ENCODE measurements at regions of chr22 and their contacts with region 1.

Region 1: DNA sequence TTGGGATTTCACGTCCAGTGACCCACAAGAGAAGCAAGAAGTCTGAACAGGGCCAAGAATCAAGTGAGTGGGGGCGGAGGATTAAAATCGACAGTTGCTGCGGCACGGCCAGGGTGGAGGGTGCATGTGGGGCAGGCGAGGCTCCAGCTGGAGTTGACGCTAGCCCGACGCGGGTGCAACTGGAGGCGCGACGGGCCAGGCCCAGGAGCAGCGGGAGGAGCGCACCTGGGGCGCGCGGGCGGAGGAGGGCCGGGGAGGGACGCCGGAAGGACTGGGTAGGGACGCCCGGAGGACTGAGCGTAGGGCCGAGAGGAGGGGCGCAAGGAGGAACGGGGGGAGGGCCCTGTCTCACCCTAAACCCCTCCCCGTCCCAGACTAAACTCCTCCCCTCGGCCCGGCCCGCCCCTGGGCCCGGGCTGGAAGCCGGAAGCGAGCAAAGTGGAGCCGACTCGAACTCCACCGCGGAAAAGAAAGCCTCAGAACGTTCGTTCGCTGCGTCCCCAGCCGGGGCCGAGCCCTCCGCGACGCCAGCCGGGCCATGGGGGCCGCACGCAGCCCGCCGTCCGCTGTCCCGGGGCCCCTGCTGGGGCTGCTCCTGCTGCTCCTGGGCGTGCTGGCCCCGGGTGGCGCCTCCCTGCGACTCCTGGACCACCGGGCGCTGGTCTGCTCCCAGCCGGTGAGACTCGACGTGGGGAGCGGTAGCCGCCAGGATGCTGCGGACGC is at the start of gene IL17RA:
- DNase-seq: peak; percentile 93 to 94
- H3K4me3 ChIP-seq: peak within 1 kb of the TSS; percentile 98
- H3K4me3 Mint-ChIP-seq: peak within 1 kb of the TSS; percentile 93
- H3K27ac Mint-ChIP-seq: peak within 1 kb of the TSS; percentile 73
- H3K4me1 ChIP-seq: no peaks in the 10 kb centered on the region
- H3K4me1 Mint-ChIP-seq: peaks cover 8% of the 10 kb centered on the region
- H3K27me3 ChIP-seq: no peaks in the 10 kb centered on the region
- H3K27me3 Mint-ChIP-seq: no peaks in the 10 kb centered on the region
- CTCF ChIP-seq: no peak
- total RNA-seq, gene IL17RA: 13.7 and 14.5 TPM in 2 replicates

Region 2: DNA sequence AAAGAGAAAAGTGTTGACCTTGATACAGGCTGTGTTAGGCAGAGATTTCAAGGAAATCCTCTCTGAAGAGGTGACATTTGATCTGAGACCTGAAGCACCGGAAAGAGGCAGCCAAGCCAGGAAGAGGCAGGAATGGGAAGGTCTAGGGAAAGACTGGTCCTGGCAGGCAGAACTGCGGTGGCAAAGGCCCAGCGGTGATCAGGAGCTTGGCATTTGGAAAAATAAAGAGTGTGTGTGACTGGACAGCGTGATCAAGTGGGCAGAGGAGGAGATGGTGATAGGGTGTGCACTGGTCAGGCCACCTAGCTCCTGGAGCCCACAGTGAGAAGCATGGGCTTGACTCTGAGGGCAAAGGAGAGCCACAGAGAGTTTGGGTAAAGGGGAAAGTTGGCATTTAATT is 49.5 kb before region 1 on chr22:
- CTCF ChIA-PET with region 1: no interaction called
- POLR2A ChIA-PET with region 1: no interaction called
- intact Hi-C with region 1: loop called (anchors 2 kb)
- DNase-seq: no peak
- H3K4me3 ChIP-seq: no peak overlapping the region
- H3K4me3 Mint-ChIP-seq: no peak overlapping the region
- H3K27ac Mint-ChIP-seq: no peak overlapping the region
- H3K4me1 ChIP-seq: no peaks in the 10 kb centered on the region
- H3K4me1 Mint-ChIP-seq: no peaks in the 10 kb centered on the region
- H3K27me3 ChIP-seq: no peaks in the 10 kb centered on the region
- H3K27me3 Mint-ChIP-seq: no peaks in the 10 kb centered on the region
- CTCF ChIP-seq: no peak

Region 3: DNA sequence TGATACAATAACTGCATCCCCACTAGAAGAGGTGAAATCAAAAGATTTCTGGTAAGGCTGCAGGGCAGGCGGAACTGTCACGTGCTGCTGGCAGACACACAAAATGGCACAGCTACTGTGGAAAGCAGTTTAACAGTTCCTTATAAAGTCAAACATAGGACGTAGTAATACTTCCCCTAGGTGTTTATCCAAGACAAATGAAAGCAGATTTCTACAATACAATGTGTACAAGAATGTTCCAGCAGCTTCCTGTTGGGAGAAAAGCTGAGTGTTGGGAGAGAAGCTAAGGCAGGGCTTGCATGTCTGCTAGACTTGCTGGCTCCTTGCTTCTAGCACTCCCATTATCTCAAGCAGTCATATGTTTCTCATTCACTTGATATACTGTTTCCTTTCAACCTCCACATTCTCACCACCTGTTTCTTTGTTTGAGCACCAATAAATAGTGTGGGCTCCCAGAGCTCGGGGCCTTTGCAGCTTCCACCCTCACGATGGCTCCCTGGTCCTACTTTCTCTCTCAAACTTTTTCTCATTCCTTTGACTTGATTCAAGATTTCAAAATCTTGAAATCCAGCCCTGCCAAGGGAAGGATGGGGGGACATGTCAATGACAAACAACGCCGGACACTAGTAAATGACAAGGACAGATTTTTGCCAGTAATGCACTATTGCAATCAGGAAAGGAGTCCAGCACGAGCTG is 21.2 kb before region 1 on chr22:
- CTCF ChIA-PET with region 1: no interaction called
- POLR2A ChIA-PET with region 1: no interaction called
- intact Hi-C with region 1: no loop called
- DNase-seq: no peak
- H3K4me3 ChIP-seq: no peak overlapping the region
- H3K4me3 Mint-ChIP-seq: no peak overlapping the region
- H3K27ac Mint-ChIP-seq: no peak overlapping the region
- H3K4me1 ChIP-seq: peaks cover 12% of the 10 kb centered on the region
- H3K4me1 Mint-ChIP-seq: peaks cover 18% of the 10 kb centered on the region
- H3K27me3 ChIP-seq: no peaks in the 10 kb centered on the region
- H3K27me3 Mint-ChIP-seq: no peaks in the 10 kb centered on the region
- CTCF ChIP-seq: no peak

Region 4: GRCh38 chr22:17121227-17122195 is 36.8 kb after region 1 on chr22 and contains the start of gene TMEM121B:
- CTCF ChIA-PET with region 1: no interaction called
- POLR2A ChIA-PET with region 1: no interaction called
- intact Hi-C with region 1: loop called (anchors 5 kb)
- DNase-seq: peak; percentile 73 to 77
- H3K4me3 ChIP-seq: peak within 1 kb of the TSS; percentile 47
- H3K4me3 Mint-ChIP-seq: peak within 1 kb of the TSS; percentile 85
- H3K27ac Mint-ChIP-seq: peak within 1 kb of the TSS; percentile 71
- H3K4me1 ChIP-seq: peaks cover 5% of the 10 kb centered on the region; the same call in 1 of the 2 replicates
- H3K4me1 Mint-ChIP-seq: peaks cover 9% of the 10 kb centered on the region
- H3K27me3 ChIP-seq: no peaks in the 10 kb centered on the region
- H3K27me3 Mint-ChIP-seq: peaks cover 9% of the 10 kb centered on the region
- CTCF ChIP-seq: no peak
- total RNA-seq, gene TMEM121B: 0.49 and 0.82 TPM in 2 replicates

Region 5: GRCh38 chr22:17140826-17141766 is 56.4 kb after region 1 on chr22:
- CTCF ChIA-PET with region 1: no interaction called
- POLR2A ChIA-PET with region 1: no interaction called
- intact Hi-C with region 1: no loop called
- DNase-seq: no peak
- H3K4me3 ChIP-seq: no peak overlapping the region
- H3K4me3 Mint-ChIP-seq: no peak overlapping the region
- H3K27ac Mint-ChIP-seq: no peak overlapping the region
- H3K4me1 ChIP-seq: no peaks in the 10 kb centered on the region
- H3K4me1 Mint-ChIP-seq: no peaks in the 10 kb centered on the region
- H3K27me3 ChIP-seq: no peaks in the 10 kb centered on the region
- H3K27me3 Mint-ChIP-seq: no peaks in the 10 kb centered on the region
- CTCF ChIP-seq: no peak